MCF 10A (cell line): ENCODE measurements at regions of chr9 and their contacts with region 1.

Region 1: DNA sequence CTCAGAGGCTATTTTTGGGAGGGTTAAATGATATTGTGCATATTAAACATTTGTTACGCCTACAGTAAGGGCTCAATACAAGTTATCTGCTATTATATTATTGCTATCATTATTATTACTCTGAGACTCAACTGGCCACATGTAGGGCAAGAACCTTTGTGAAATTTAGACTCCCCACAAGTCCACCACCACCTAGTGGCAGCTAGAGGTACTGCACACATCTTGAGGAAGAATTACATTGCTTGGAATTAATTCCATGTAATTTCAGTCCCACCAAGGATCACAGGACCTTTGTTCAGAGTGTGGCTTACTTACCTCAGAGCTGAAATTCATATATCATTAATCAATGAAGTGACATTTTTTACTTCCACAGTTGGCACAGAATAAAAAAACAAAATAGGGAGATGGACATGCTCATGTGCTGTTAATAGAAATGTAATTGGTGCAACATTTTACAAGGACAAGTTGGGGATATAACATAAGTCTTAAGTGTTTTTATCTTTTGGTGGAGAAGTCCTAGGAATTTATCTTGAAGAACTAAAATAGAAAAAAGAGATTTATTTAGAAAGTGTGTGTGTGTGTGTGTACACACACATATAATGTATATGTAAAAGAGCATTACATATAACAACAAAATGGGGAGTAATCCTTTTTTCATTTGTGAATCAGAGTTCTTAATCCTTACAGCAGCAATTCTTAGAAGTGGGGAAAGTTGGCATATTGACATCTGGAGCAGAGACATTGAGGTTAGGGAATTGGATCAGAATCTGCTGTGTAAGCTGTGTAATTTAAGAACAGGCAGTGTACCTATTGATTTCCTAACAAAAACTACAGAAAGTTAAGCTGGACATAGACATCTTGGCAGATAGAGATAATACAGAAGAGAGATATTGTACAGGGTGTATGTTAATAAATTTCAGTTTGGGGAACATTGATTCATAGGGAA is 11.2 kb downstream of the MSANTD3 start:
- DNase-seq: peak; percentile 82
- H3K4me3 Mint-ChIP-seq: no peak overlapping the region
- H3K27ac Mint-ChIP-seq: peak overlapping the region; percentile 66
- H3K4me1 Mint-ChIP-seq: peaks cover 5% of the 10 kb centered on the region
- H3K27me3 Mint-ChIP-seq: no peaks in the 10 kb centered on the region
- CTCF ChIP-seq: peak; percentile 74

Region 2: GRCh38 chr9:100322954-100323536 is 115.1 kb before region 1 on chr9:
- CTCF ChIA-PET with region 1: interaction called, 13 read pairs
- POLR2A ChIA-PET with region 1: no interaction called
- intact Hi-C with region 1: loop called (anchors 5 kb)
- DNase-seq: peak; percentile 46
- H3K4me3 Mint-ChIP-seq: no peak overlapping the region
- H3K27ac Mint-ChIP-seq: no peak overlapping the region
- H3K4me1 Mint-ChIP-seq: peaks cover 3% of the 10 kb centered on the region
- H3K27me3 Mint-ChIP-seq: no peaks in the 10 kb centered on the region
- CTCF ChIP-seq: peak; percentile 27

Region 3: DNA sequence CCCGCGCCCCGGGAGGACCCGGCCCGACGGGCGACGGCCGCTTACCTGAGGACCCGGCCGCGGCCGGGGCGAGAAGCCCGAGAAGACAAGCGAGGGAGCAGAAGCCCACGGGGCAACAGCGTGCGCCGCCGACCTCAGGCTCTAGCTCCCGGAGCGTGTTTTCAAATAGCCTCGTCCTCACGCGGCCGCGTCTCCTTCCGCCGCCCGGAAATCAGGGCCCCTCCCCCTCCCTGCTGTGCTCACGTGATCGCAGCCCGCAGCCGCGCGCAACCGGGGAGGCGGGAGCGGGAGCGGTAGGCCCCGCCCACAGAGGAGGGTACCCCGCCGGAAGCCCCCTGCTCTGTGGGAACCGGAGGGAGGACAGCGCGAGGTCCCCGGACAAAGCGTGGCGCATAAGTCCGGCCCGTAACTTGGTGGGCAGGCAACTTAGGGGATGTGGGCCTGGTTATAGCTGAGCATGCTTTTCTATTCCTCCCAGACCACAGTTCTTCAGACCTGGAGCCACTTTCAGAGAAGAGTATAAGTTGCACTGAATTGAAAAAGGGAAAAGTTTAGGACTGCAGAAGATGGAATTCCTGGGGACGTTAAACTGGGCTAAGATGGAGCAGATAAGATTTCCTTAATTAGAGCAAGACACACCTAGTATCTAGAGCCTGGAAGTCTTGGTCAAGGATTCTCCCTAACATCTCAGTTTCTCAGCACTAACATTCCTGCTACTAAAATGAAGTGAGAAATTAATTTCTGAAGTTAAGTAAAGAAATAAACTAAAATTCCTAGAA is 85.2 kb before region 1 on chr9 and contains the start of gene TEX10:
- CTCF ChIA-PET with region 1: interaction called, 18 read pairs
- POLR2A ChIA-PET with region 1: interaction called, 12 read pairs
- intact Hi-C with region 1: no loop called
- DNase-seq: peak; percentile 82
- H3K4me3 Mint-ChIP-seq: peak within 1 kb of the TSS; percentile 94
- H3K27ac Mint-ChIP-seq: peak within 1 kb of the TSS; percentile 95
- H3K4me1 Mint-ChIP-seq: peaks cover 35% of the 10 kb centered on the region
- H3K27me3 Mint-ChIP-seq: no peaks in the 10 kb centered on the region
- CTCF ChIP-seq: no peak
- total RNA-seq, gene TEX10: 37.0 and 38.2 TPM in 2 replicates

Region 4: DNA sequence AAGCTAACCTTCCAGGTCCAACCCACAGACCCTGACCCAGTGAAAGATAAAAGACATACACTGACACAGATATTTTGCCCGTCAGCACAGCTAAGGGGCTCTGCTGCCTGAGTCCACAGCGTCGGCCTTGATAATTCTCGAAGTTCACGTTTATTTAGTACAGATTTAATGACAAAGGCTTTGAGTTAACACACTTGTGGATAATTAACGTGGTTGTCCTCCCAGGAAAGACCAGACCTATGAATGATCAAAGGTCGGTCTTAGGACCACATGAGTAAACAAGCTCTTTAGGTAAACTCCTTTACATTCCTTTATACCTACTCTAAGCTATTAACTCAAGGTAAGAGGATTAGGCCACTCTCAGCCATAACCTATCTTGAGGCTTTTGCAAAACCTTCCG is 74.1 kb before region 1 on chr9:
- CTCF ChIA-PET with region 1: no interaction called
- POLR2A ChIA-PET with region 1: no interaction called
- intact Hi-C with region 1: no loop called
- DNase-seq: no peak
- H3K4me3 Mint-ChIP-seq: no peak overlapping the region
- H3K27ac Mint-ChIP-seq: no peak overlapping the region
- H3K4me1 Mint-ChIP-seq: no peaks in the 10 kb centered on the region
- H3K27me3 Mint-ChIP-seq: no peaks in the 10 kb centered on the region
- CTCF ChIP-seq: no peak

Region 5: GRCh38 chr9:100379862-100380261 is 58.3 kb before region 1 on chr9:
- CTCF ChIA-PET with region 1: no interaction called
- POLR2A ChIA-PET with region 1: no interaction called
- intact Hi-C with region 1: no loop called
- DNase-seq: peak; percentile 42
- H3K4me3 Mint-ChIP-seq: no peak overlapping the region
- H3K27ac Mint-ChIP-seq: peak overlapping the region; percentile 66
- H3K4me1 Mint-ChIP-seq: peaks cover 13% of the 10 kb centered on the region
- H3K27me3 Mint-ChIP-seq: no peaks in the 10 kb centered on the region
- CTCF ChIP-seq: no peak

Region 6: DNA sequence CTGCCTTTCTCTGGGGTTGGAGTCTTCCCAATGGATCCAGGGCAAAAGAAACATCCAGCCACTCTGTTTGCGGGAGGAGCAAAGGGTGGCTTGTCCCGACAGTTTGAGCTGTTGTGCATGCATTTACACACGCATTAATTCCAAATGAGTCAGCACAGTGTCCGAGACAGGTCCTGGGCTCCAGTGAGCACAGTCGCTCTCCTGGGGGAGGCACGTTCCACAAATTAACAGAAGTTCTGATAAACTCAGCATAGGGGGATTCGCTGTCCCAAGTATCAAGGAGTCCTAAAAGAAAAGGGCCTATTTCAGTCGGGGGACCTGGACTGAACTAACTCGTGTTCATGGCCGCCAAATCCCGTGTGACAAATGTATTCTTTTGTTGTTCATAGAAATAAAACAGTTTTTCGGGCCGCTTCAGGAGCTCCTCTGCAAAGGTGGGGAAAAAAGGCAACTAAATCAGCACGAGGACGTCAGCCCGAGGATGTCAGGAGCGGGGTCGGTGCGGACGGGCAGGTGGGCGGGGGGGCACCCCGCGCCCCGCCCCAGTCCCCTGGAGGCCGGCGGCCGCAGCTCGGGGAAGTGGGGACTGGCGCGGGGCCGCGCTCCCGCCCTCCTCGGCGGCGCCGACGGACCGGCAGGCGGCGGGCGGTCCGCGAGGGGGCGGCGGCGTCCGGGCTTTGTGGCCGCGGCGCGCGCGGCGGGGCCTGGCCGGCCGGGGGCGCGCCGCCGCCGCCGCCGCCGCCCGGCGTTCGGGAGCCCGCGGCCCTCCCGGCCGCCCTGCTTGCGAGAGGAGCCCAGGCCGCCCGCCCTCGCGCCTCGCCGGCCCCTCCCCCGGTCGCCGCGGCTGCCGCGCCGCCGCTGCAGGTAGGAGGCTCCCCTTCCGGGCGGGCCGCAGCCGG is 11.4 kb before region 1 on chr9 and contains the start of gene MSANTD3:
- CTCF ChIA-PET with region 1: interaction called, 16 read pairs
- POLR2A ChIA-PET with region 1: interaction called, 6 read pairs
- intact Hi-C with region 1: no loop called
- DNase-seq: peak; percentile 67
- H3K4me3 Mint-ChIP-seq: peak within 1 kb of the TSS; percentile 97
- H3K27ac Mint-ChIP-seq: peak within 1 kb of the TSS; percentile 98
- H3K4me1 Mint-ChIP-seq: peaks cover 45% of the 10 kb centered on the region
- H3K27me3 Mint-ChIP-seq: no peaks in the 10 kb centered on the region
- CTCF ChIP-seq: no peak
- total RNA-seq, gene MSANTD3: 41.3 and 56.3 TPM in 2 replicates

Region 7: GRCh38 chr9:100449420-100449819 is 11.3 kb after region 1 on chr9:
- CTCF ChIA-PET with region 1: interaction called, 13 read pairs
- POLR2A ChIA-PET with region 1: interaction called, 4 read pairs
- intact Hi-C with region 1: no loop called
- DNase-seq: no peak
- H3K4me3 Mint-ChIP-seq: no peak overlapping the region
- H3K27ac Mint-ChIP-seq: no peak overlapping the region
- H3K4me1 Mint-ChIP-seq: peaks cover under 1% of the 10 kb centered on the region
- H3K27me3 Mint-ChIP-seq: no peaks in the 10 kb centered on the region
- CTCF ChIP-seq: no peak

Region 8: GRCh38 chr9:100477241-100477640 is 39.1 kb after region 1 on chr9:
- CTCF ChIA-PET with region 1: interaction called, 12 read pairs
- POLR2A ChIA-PET with region 1: no interaction called
- intact Hi-C with region 1: no loop called
- DNase-seq: no peak
- H3K4me3 Mint-ChIP-seq: no peak overlapping the region
- H3K27ac Mint-ChIP-seq: no peak overlapping the region
- H3K4me1 Mint-ChIP-seq: no peaks in the 10 kb centered on the region
- H3K27me3 Mint-ChIP-seq: no peaks in the 10 kb centered on the region
- CTCF ChIP-seq: no peak

Region 9: GRCh38 chr9:100674419-100675122 is 236.4 kb after region 1 on chr9:
- CTCF ChIA-PET with region 1: no interaction called
- POLR2A ChIA-PET with region 1: no interaction called
- intact Hi-C with region 1: no loop called
- DNase-seq: peak; percentile 27
- H3K4me3 Mint-ChIP-seq: no peak overlapping the region
- H3K27ac Mint-ChIP-seq: peak overlapping the region; percentile 4
- H3K4me1 Mint-ChIP-seq: peaks cover 13% of the 10 kb centered on the region
- H3K27me3 Mint-ChIP-seq: peaks cover 50% of the 10 kb centered on the region
- CTCF ChIP-seq: no peak